Caco-2 (cell line): ENCODE measurements at regions of chr15 and their contacts with region 1.

Region 1: GRCh38 chr15:74598126-74598842 is 17.4 kb upstream of the CLK3 start:
- DNase-seq: peak; percentile 93 to 94
- H3K4me3 ChIP-seq: peak overlapping the region; percentile 53
- H3K4me3 Mint-ChIP-seq: peak overlapping the region; percentile 88
- H3K27ac Mint-ChIP-seq: peak overlapping the region; percentile 91
- H3K4me1 ChIP-seq: peaks cover 10% of the 10 kb centered on the region
- H3K4me1 Mint-ChIP-seq: peaks cover 11% of the 10 kb centered on the region
- H3K27me3 ChIP-seq: no peaks in the 10 kb centered on the region
- H3K27me3 Mint-ChIP-seq: no peaks in the 10 kb centered on the region
- CTCF ChIP-seq: no peak

Region 2: DNA sequence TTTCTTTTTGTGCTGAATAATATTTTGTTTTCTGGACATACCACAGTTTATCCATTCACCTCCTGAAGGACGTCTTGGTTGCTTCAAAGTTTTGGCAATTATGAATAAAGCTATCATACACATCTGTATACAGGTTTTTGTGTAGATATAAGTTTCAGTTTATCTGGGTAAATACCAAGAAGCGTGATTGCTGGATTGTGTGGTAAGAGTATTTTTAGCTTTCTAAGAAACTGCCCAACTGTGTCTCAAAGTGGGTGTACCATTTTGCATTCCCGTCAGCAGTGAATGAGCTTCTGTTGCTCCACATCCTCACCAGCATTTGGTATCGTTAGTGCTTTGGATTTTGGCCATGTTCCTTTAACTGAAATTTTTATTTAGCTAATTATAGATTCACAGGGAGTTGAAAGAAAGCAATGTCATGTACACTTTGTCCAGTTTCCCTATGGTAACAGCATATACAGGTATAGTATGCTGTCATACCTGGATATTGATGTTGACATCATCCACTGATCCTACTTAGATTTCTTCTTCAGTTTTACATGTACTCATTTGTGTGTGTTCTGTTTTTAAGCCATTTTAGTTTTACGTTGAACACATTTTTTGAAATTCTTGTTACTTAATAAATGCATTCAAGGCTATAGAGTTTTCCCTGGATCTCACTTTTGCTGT is 45.4 kb before region 1 on chr15:
- CTCF ChIA-PET with region 1: no interaction called
- POLR2A ChIA-PET with region 1: no interaction called
- intact Hi-C with region 1: no loop called
- DNase-seq: no peak
- H3K4me3 ChIP-seq: no peak overlapping the region
- H3K4me3 Mint-ChIP-seq: no peak overlapping the region
- H3K27ac Mint-ChIP-seq: no peak overlapping the region
- H3K4me1 ChIP-seq: no peaks in the 10 kb centered on the region
- H3K4me1 Mint-ChIP-seq: no peaks in the 10 kb centered on the region
- H3K27me3 ChIP-seq: no peaks in the 10 kb centered on the region
- H3K27me3 Mint-ChIP-seq: no peaks in the 10 kb centered on the region
- CTCF ChIP-seq: no peak

Region 3: GRCh38 chr15:74615508-74616365 is 17.5 kb after region 1 on chr15 and contains the start of gene CLK3:
- CTCF ChIA-PET with region 1: interaction called, 5 read pairs
- POLR2A ChIA-PET with region 1: interaction called, 6 read pairs
- intact Hi-C with region 1: loop called (anchors 2 kb)
- DNase-seq: peak; percentile 95 to 99
- H3K4me3 ChIP-seq: peak within 1 kb of the TSS; percentile 94
- H3K4me3 Mint-ChIP-seq: peak within 1 kb of the TSS; percentile 86
- H3K27ac Mint-ChIP-seq: peak within 1 kb of the TSS; percentile 82
- H3K4me1 ChIP-seq: peaks cover 9% of the 10 kb centered on the region; the same call in 1 of the 2 replicates
- H3K4me1 Mint-ChIP-seq: no peaks in the 10 kb centered on the region
- H3K27me3 ChIP-seq: no peaks in the 10 kb centered on the region
- H3K27me3 Mint-ChIP-seq: no peaks in the 10 kb centered on the region
- CTCF ChIP-seq: no peak
- total RNA-seq, gene CLK3: 49.4 and 54.5 TPM in 2 replicates